GM12878 (cell line): ENCODE measurements at regions of chr1 and their contacts with region 1.

Region 1: GRCh38 chr1:26608895-26609294 is 79.3 kb downstream of the RPS6KA1 start:
- DNase-seq: no peak
- ATAC-seq: no peak
- H3K4me3 ChIP-seq: no peak overlapping the region
- H3K27ac ChIP-seq: no peak overlapping the region
- H3K4me1 ChIP-seq: no peaks in the 10 kb centered on the region
- H3K27me3 ChIP-seq: no peaks in the 10 kb centered on the region
- CTCF ChIP-seq: peak in 1 of 3 experiments; percentile 35; a peak in 2 of 6 replicates
- EP300 ChIP-seq: no peak
- POLR2A ChIP-seq: no peak
- RAD21 ChIP-seq: peak; percentile 49

Region 2: GRCh38 chr1:26874896-26875295 is 266.0 kb after region 1 on chr1:
- CTCF ChIA-PET with region 1: interaction called, 4 read pairs
- POLR2A ChIA-PET with region 1: no interaction called
- RAD21 ChIA-PET with region 1: no interaction called
- SMC1A ChIA-PET with region 1: no interaction called
- in situ Hi-C with region 1: loop called (anchors 5 kb)
- intact Hi-C with region 1: no loop called
- DNase-seq: no peak
- ATAC-seq: no peak
- H3K4me3 ChIP-seq: no peak overlapping the region
- H3K27ac ChIP-seq: no peak overlapping the region
- H3K4me1 ChIP-seq: no peaks in the 10 kb centered on the region
- H3K27me3 ChIP-seq: no peaks in the 10 kb centered on the region
- CTCF ChIP-seq: no peak
- EP300 ChIP-seq: no peak
- POLR2A ChIP-seq: no peak
- RAD21 ChIP-seq: no peak